Mammary epithelial cell (primary cell): ENCODE measurements at regions of chr9 and their contacts with region 1.

Region 1: GRCh38 chr9:6681147-6681956 is 35.8 kb upstream of the GLDC start:
- DNase-seq: peak; percentile 96
- H3K4me3 ChIP-seq: peak overlapping the region; percentile 70 to 79 (median 75)
- H3K27ac ChIP-seq: peak overlapping the region; percentile 92
- H3K4me1 ChIP-seq: peaks cover 11% of the 10 kb centered on the region
- H3K27me3 ChIP-seq: no peaks in the 10 kb centered on the region
- CTCF ChIP-seq: no peak

Region 2: DNA sequence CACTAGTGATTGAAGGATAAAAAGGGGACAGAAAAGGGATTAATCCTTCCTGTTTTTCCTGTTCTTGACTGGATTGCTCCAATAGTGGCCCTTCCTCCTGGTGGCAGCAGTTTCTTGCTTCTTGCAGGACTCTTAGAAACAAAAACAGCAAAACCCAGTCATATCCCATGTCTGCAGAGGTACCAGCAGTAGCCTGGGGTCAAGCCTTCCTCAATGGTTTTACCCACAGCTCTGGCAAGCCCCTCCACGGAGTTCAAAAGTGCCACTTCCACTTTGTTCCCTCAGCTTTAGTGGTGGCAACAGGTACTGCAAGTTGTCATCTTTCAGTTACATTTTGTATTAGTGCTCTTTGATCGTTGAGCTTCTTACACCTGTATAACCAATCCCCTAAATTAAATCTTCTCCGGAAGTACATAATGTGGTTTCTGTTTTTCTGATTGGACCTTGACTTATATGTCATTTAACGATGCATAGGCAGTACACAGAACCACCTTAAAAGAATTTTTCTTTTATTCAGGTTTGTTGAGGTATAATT is 657.3 kb before region 1 on chr9:
- CTCF ChIA-PET with region 1: no interaction called
- dilution Hi-C with region 1: no loop called
- in situ Hi-C with region 1: no loop called
- intact Hi-C with region 1: no loop called
- DNase-seq: no peak
- H3K4me3 ChIP-seq: no peak overlapping the region
- H3K27ac ChIP-seq: no peak overlapping the region
- H3K4me1 ChIP-seq: no peaks in the 10 kb centered on the region
- H3K27me3 ChIP-seq: no peaks in the 10 kb centered on the region
- CTCF ChIP-seq: peak; percentile 53 to 54

Region 3: GRCh38 chr9:6412487-6413364 is 268.6 kb before region 1 on chr9 and contains the start of gene UHRF2:
- CTCF ChIA-PET with region 1: no interaction called
- dilution Hi-C with region 1: no loop called
- in situ Hi-C with region 1: no loop called
- intact Hi-C with region 1: loop called (anchors 5 kb)
- DNase-seq: peak; percentile 98
- H3K4me3 ChIP-seq: peak within 1 kb of the TSS; percentile 82 to 95 (median 84)
- H3K27ac ChIP-seq: peak within 1 kb of the TSS; percentile 75
- H3K4me1 ChIP-seq: peaks cover 19% of the 10 kb centered on the region
- H3K27me3 ChIP-seq: no peaks in the 10 kb centered on the region
- CTCF ChIP-seq: peak in 1 of 2 donors; percentile 4
- total RNA-seq, gene UHRF2: 45.5 to 72.0 TPM

Region 4: DNA sequence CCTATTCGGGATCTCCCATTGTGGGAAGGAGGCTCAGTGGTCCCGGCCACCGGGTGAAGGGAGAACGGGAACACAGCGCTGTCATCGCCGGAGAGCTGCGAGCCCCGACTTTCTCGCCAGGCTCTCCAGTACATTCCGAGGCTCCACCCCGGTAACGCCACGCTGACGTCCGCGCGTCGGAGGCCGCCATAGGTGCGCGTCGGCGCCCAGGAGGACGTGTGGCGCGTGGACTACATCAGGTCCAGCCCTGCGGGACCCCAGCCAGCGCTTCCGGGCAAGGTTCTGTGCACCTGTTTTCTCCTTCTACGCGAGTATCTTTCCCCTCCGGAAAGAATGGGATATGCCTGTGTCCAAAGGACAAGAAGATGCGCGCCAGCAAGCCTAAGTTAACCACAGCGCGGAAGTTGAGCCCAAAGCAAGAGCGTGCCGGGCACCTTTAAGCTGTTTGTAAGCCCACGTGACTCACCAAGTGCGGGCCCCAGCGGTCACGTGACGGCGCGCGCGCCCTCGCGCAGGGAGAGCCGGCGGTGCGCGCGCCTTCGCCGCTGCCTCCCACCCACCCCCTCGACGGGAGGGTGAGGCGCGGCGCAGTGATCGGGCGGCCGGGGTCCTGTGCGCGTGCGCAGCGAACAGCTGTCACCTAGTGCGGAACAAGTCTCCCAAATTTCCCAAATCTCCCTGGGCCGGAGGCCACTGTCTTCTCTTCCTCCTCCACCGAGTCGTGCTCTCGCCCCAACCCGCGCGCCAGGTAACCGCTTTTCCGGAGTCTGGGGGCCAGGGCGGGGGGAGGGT is 76.3 kb after region 1 on chr9 and contains the start of gene KDM4C:
- CTCF ChIA-PET with region 1: no interaction called
- dilution Hi-C with region 1: no loop called
- in situ Hi-C with region 1: no loop called
- intact Hi-C with region 1: loop called (anchors 5 kb)
- DNase-seq: peak; percentile 94
- H3K4me3 ChIP-seq: peak within 1 kb of the TSS; percentile 80 to 97 (median 89)
- H3K27ac ChIP-seq: peak within 1 kb of the TSS; percentile 95
- H3K4me1 ChIP-seq: peaks cover 5% of the 10 kb centered on the region
- H3K27me3 ChIP-seq: no peaks in the 10 kb centered on the region
- CTCF ChIP-seq: no peak
- total RNA-seq, gene KDM4C: 27.2 to 34.7 TPM

Region 5: DNA sequence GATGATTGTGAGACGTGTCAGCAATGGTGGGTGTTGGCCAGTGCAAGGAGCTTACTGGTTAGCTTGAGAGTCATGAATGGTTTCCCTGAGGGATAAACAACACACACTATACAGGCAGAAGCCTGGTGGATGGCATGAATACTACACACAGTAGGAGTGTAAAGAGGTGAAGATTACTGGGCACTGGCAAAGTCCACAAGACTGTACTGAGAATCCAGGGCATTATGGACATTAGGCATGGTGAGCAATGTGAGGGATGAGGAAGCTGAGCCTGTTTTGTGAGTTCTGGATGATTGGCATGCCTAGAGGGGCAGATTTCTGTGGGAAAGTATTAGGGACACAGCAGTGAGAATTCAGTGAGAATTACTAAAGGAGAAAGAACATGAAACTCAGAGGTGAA is 147.7 kb after region 1 on chr9:
- CTCF ChIA-PET with region 1: no interaction called
- dilution Hi-C with region 1: no loop called
- in situ Hi-C with region 1: no loop called
- intact Hi-C with region 1: no loop called
- DNase-seq: peak; percentile 40
- H3K4me3 ChIP-seq: no peak overlapping the region
- H3K27ac ChIP-seq: no peak overlapping the region
- H3K4me1 ChIP-seq: peaks cover 4% of the 10 kb centered on the region
- H3K27me3 ChIP-seq: no peaks in the 10 kb centered on the region
- CTCF ChIP-seq: peak in 1 of 2 donors; percentile 14

Region 6: GRCh38 chr9:6869081-6869948 is 188.0 kb after region 1 on chr9:
- CTCF ChIA-PET with region 1: no interaction called
- dilution Hi-C with region 1: no loop called
- in situ Hi-C with region 1: no loop called
- intact Hi-C with region 1: no loop called
- DNase-seq: no peak
- H3K4me3 ChIP-seq: no peak overlapping the region
- H3K27ac ChIP-seq: no peak overlapping the region
- H3K4me1 ChIP-seq: peaks cover 5% of the 10 kb centered on the region
- H3K27me3 ChIP-seq: no peaks in the 10 kb centered on the region
- CTCF ChIP-seq: no peak